Activated T-helper 1 cell treated with anti-CD3 and anti-CD28 coated beads, Interleukin-12 subunit alpha, Interleukin-12 subunit beta, Interleukin-2, Interleukin-4 antibody, amounts not matched to agents 30 ng/mL and 10 ng/mL and 1 ng/mL, durations not matched to agents 14 hours and 24 hours and 36 hours (primary cell): ENCODE measurements at regions of chr14 and their contacts with region 1.

Region 1: GRCh38 chr14:100317912-100318808 is 5.0 kb upstream of the SLC25A47 start:
- DNase-seq: peak; percentile 47
- H3K4me3 Mint-ChIP-seq: peak overlapping the region; percentile 26
- H3K27ac Mint-ChIP-seq: no peak overlapping the region
- H3K4me1 Mint-ChIP-seq: peaks cover 5% of the 10 kb centered on the region
- H3K27me3 Mint-ChIP-seq: peaks cover 11% of the 10 kb centered on the region

Region 2: GRCh38 chr14:100285021-100285912 is 32.9 kb before region 1 on chr14:
- intact Hi-C with region 1: loop called (anchors 1 kb)
- DNase-seq: peak; percentile 77
- H3K4me3 Mint-ChIP-seq: no peak overlapping the region
- H3K27ac Mint-ChIP-seq: no peak overlapping the region
- H3K4me1 Mint-ChIP-seq: peaks cover 4% of the 10 kb centered on the region
- H3K27me3 Mint-ChIP-seq: no peaks in the 10 kb centered on the region

Region 3: GRCh38 chr14:100306420-100307219 is 11.5 kb before region 1 on chr14 and contains the start of gene SLC25A29:
- intact Hi-C with region 1: loop called (anchors 1 kb)
- DNase-seq: peak; percentile 68
- H3K4me3 Mint-ChIP-seq: peak within 1 kb of the TSS; percentile 81
- H3K27ac Mint-ChIP-seq: no peak within 1 kb of the TSS
- H3K4me1 Mint-ChIP-seq: peaks cover 22% of the 10 kb centered on the region
- H3K27me3 Mint-ChIP-seq: peaks cover 23% of the 10 kb centered on the region
- total RNA-seq, gene SLC25A29: 15.9 and 19.1 TPM in 2 replicates

Region 4: DNA sequence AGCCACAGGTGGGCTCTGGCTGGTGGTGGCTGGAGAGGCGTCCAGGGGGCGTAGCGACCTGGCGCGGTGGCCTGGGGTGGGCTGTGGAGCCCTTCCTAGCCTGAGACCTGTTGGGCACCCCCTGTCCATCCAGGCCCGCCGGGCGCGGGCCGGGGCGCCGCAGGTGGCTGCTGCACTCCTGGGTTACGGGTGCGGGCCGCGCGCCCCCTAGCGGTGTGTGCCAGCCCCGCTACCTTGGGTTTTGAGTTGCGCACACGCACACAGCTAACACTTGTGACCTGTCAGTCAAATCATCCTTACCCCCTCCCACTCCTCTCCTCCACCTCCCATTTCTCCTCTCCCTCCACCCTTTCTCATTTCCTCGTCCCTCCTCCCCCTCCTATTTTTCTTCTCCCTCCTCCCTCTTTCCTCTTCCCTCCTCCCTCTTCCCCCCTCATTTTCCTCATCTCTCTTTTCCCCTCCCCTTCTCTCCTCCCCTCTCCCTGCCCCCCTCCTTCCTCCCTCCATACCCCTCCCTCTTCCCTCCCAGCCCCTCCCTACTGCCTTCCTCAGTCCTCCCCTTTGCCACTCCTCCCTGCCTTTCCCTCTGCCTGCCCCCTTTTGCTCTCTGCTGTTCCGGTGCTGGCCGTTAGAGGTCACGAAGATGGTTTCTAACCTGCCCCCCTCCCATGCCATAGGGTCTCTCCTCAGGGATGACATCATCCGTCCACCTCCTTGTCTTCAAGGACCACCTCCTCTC is 510.0 kb after region 1 on chr14:
- intact Hi-C with region 1: no loop called
- DNase-seq: no peak
- H3K4me3 Mint-ChIP-seq: no peak overlapping the region
- H3K27ac Mint-ChIP-seq: peak overlapping the region; percentile 44
- H3K4me1 Mint-ChIP-seq: no peaks in the 10 kb centered on the region
- H3K27me3 Mint-ChIP-seq: peaks cover 23% of the 10 kb centered on the region